ENCODE measurements at regions of chr19 and their contacts with region 1.

Region 1: GRCh38 chr19:19554074-19555023 is 16.3 kb downstream of the CILP2 start:
- DNase-seq: peak; percentile 33 to 65 (median 37)
- H3K4me3 ChIP-seq: no peak overlapping the region
- H3K4me3 Mint-ChIP-seq: no peak overlapping the region
- H3K27ac ChIP-seq: no peak overlapping the region
- H3K27ac Mint-ChIP-seq: peak overlapping the region in 1 of 8 donors; percentile 58
- H3K4me1 ChIP-seq: no peaks in the 10 kb centered on the region
- H3K4me1 Mint-ChIP-seq: peaks cover 3 to 4% (median 4%) of the 10 kb centered on the region in 3 donors
- H3K27me3 ChIP-seq: no peaks in the 10 kb centered on the region
- H3K27me3 Mint-ChIP-seq: peaks cover 0 to 4% of the 10 kb centered on the region in 2 donors

Region 2: DNA sequence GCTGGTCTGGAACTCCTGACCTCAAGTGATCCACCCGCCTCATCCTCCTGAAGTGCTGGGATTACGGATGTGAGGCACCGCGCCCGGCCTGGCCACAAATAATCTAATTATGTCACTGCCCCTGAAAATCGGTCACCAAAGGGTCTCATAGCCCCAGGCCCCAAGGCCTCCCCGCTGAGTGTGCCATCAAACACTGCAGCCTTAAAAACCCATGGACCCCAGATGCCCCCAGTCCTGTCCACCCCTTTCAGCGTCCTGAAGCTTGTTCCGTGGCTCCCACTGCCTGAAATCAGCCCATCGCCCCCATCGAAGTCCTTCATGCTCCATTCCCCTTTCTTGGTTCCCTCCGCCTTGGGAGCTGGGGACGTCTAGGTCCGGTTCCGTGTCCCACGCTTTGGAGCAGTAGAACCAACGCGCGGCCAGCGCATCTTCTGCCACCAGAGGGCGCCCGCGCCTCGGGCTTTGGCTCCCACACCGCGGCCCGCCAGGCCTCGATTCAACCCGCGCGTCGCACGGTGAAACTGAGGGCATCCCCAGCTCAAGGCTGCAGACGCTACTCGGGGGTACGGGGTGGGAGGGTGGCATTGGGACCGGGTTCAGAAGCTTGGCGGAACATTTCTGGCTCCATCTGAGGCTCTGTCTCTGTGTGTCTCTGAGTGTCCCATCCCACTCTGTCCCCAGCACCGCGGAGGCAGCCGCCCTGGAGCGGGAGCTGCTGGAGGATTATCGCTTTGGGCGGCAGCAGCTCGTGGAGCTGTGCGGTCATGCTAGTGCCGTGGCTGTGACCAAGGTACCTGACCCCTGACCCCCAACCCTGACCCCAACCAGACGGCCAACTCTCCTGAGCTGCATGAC is 22.2 kb before region 1 on chr19:
- CTCF ChIA-PET with region 1: interaction called, 29 read pairs
- POLR2A ChIA-PET with region 1: no interaction called
- DNase-seq: peak; percentile 74 to 87 (median 82)
- H3K4me3 ChIP-seq: no peak overlapping the region
- H3K4me3 Mint-ChIP-seq: no peak overlapping the region
- H3K27ac ChIP-seq: no peak overlapping the region
- H3K27ac Mint-ChIP-seq: peak overlapping the region; percentile 47 to 97 (median 64)
- H3K4me1 ChIP-seq: peaks cover 9% of the 10 kb centered on the region
- H3K4me1 Mint-ChIP-seq: peaks cover 5 to 14% (median 5%) of the 10 kb centered on the region in 3 donors
- H3K27me3 ChIP-seq: no peaks in the 10 kb centered on the region
- H3K27me3 Mint-ChIP-seq: no peaks in the 10 kb centered on the region

Region 3: GRCh38 chr19:19542319-19542906 is 11.9 kb before region 1 on chr19:
- CTCF ChIA-PET with region 1: interaction called, 13 read pairs
- POLR2A ChIA-PET with region 1: no interaction called
- DNase-seq: no peak
- H3K4me3 ChIP-seq: no peak overlapping the region
- H3K4me3 Mint-ChIP-seq: peak overlapping the region in 4 of 7 donors; percentile 6 to 59 (median 32)
- H3K27ac ChIP-seq: no peak overlapping the region
- H3K27ac Mint-ChIP-seq: no peak overlapping the region
- H3K4me1 ChIP-seq: peaks cover 24% of the 10 kb centered on the region
- H3K4me1 Mint-ChIP-seq: peaks cover 18 to 38% (median 23%) of the 10 kb centered on the region in 3 donors
- H3K27me3 ChIP-seq: peaks cover 3% of the 10 kb centered on the region
- H3K27me3 Mint-ChIP-seq: peaks cover 3 to 4% of the 10 kb centered on the region in 2 donors

Region 4: DNA sequence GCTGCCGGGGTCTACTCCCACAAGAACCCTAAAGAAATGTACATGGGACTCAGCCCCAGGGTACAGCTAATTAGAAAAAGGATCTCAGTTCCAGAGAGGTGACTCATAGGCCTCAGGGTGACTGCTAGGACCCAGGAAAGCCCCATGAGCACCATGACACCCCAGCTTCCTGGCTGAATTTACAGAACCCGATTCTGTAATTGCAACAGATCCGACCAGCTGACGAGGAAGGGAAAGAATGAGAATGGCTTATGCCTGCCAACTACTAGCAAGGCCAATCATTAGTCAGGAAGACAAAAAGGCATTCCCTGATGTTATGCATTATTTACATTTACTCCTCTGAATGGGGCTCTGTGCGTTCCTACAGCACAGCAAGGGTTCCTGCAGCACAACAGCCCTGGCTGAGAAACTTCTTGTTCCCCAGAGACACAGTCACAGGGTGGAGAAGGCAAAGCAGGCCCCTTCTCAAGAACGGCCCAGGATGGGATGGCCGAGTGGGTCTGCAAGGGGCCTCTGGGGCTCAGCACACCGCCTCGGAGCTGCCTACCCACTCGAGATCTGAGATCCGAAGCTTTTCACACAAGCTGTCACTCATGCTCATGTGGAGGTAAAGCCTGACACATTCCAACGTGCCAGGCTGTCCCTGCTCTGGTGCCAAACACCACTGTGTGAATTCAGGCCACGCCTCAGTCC is 36.9 kb after region 1 on chr19:
- CTCF ChIA-PET with region 1: interaction called, 12 read pairs
- POLR2A ChIA-PET with region 1: no interaction called
- DNase-seq: peak in 4 of 5 donors; percentile 48 to 83 (median 66)
- H3K4me3 ChIP-seq: no peak overlapping the region
- H3K4me3 Mint-ChIP-seq: peak overlapping the region; percentile 8 to 86 (median 63)
- H3K27ac ChIP-seq: peak overlapping the region; percentile 14
- H3K27ac Mint-ChIP-seq: peak overlapping the region; percentile 84 to 99 (median 94)
- H3K4me1 ChIP-seq: peaks cover 33% of the 10 kb centered on the region
- H3K4me1 Mint-ChIP-seq: peaks cover 36 to 63% (median 47%) of the 10 kb centered on the region in 3 donors
- H3K27me3 ChIP-seq: no peaks in the 10 kb centered on the region
- H3K27me3 Mint-ChIP-seq: no peaks in the 10 kb centered on the region

Region 5: DNA sequence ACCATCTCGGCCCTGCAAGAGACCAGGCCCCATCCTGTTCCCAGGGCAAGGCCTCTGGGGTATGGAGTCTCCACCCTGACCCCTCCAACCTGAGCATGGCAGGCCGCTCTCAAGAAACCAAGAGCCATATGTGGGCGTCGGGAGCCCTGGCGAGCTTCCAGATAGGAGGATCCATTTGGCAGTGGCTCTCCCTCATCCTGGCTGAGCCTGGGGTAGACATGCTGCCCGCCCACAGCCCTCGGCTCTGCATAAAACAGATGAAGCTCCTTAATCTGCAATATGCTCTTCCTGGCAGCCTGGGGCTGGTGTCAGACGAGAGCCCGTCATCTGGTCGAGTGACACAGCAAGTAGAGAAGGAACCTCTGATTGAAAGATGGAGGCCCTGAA is 103.0 kb after region 1 on chr19:
- CTCF ChIA-PET with region 1: interaction called, 4 read pairs
- POLR2A ChIA-PET with region 1: interaction called, 13 read pairs
- DNase-seq: peak in 1 of 5 donors; percentile 29
- H3K4me3 ChIP-seq: no peak overlapping the region
- H3K4me3 Mint-ChIP-seq: no peak overlapping the region
- H3K27ac ChIP-seq: no peak overlapping the region
- H3K27ac Mint-ChIP-seq: no peak overlapping the region
- H3K4me1 ChIP-seq: peaks cover 13% of the 10 kb centered on the region
- H3K4me1 Mint-ChIP-seq: peaks cover 20 to 21% (median 21%) of the 10 kb centered on the region in 3 donors
- H3K27me3 ChIP-seq: no peaks in the 10 kb centered on the region
- H3K27me3 Mint-ChIP-seq: no peaks in the 10 kb centered on the region